ENCODE measurements at regions of chr15 and their contacts with region 1.

Region 1: GRCh38 chr15:48025118-48025517 is 95.7 kb upstream of the SLC24A5 start:
- DNase-seq: no peak
- ATAC-seq: no peak
- H3K4me3 ChIP-seq: no peak overlapping the region
- H3K27ac ChIP-seq: no peak overlapping the region
- H3K4me1 ChIP-seq: no peaks in the 10 kb centered on the region
- H3K27me3 ChIP-seq: peaks cover 0 to 7% (median 0%) of the 10 kb centered on the region in 7 donors
- CTCF ChIP-seq: no peak

Region 2: DNA sequence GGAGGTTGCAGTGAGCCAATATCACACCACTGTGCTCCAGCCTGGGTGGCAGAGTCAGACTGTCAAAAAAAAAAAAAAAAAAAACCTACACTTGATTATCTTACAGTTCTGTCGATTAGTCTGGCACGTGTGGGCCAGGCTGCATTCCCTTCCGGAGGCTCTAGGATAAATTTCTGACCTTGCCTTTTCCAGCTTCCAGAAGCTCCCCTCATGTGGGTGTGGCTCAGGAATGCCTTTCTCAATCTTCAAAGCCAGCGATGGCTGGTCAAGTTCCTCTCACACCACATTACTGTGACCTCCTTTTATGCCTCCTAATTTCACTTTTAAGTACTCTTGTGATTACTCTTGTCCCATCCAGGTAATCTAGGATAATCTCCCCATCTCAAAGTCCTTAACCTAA is 247.9 kb after region 1 on chr15:
- intact Hi-C with region 1: no loop called
- DNase-seq: no peak
- ATAC-seq: no peak
- H3K4me3 ChIP-seq: no peak overlapping the region
- H3K27ac ChIP-seq: no peak overlapping the region
- H3K4me1 ChIP-seq: no peaks in the 10 kb centered on the region
- H3K27me3 ChIP-seq: peaks cover 0 to 16% (median 5%) of the 10 kb centered on the region in 7 donors
- CTCF ChIP-seq: no peak

Region 3: DNA sequence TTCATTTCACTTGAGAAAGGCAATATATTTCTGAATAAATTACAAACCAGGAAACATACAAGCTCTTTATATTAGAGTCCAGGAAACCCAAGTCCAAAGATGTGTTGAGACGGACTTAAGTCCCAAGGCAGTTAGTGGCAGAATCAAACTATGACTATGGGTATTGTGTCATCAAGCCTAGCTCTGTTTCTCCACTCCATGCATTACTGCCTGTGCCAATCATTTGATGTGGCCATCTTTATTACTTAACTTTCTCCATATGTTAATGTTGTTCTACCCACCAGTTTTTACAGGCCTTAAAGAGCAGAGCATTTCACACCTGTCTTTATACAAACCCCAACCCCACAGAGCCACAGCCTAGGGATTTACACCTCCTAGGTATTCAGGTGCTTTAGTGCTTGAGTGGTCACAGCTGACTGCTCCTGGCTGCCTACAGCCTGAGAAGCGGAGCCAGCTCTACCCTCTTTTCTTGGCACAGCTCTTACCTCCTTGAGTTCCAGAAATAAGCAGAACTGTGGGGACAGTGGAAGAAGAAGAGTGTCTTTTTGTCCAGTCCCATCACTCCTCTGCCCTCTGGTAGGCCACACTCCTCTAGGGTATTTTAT is 1687.8 kb after region 1 on chr15:
- intact Hi-C with region 1: loop called in 1 of 10 experiments (anchors 5 kb)
- DNase-seq: no peak
- ATAC-seq: no peak
- H3K4me3 ChIP-seq: no peak overlapping the region
- H3K27ac ChIP-seq: no peak overlapping the region
- H3K4me1 ChIP-seq: peaks cover 0 to 30% (median 0%) of the 10 kb centered on the region in 9 donors
- H3K27me3 ChIP-seq: no peaks in the 10 kb centered on the region
- CTCF ChIP-seq: no peak